CD4-positive, alpha-beta T cell (primary cell): ENCODE measurements at regions of chr12 and their contacts with region 1.

Region 1: GRCh38 chr12:132710422-132711168 is at the start of gene PGAM5:
- DNase-seq: peak; percentile 83 to 99 (median 92)
- ATAC-seq: peak; percentile 97
- H3K4me3 ChIP-seq: peak within 1 kb of the TSS; percentile 81
- H3K4me3 Mint-ChIP-seq: peak within 1 kb of the TSS; percentile 93
- H3K27ac ChIP-seq: peak within 1 kb of the TSS; percentile 88 to 93
- H3K27ac Mint-ChIP-seq: peak within 1 kb of the TSS; percentile 92
- H3K4me1 ChIP-seq: peaks cover 34% of the 10 kb centered on the region
- H3K4me1 Mint-ChIP-seq: peaks cover 16% of the 10 kb centered on the region
- H3K27me3 ChIP-seq: no peaks in the 10 kb centered on the region
- H3K27me3 Mint-ChIP-seq: no peaks in the 10 kb centered on the region
- CTCF ChIP-seq: no peak
- total RNA-seq, gene PGAM5: 12.8 to 15.1 TPM

Region 2: DNA sequence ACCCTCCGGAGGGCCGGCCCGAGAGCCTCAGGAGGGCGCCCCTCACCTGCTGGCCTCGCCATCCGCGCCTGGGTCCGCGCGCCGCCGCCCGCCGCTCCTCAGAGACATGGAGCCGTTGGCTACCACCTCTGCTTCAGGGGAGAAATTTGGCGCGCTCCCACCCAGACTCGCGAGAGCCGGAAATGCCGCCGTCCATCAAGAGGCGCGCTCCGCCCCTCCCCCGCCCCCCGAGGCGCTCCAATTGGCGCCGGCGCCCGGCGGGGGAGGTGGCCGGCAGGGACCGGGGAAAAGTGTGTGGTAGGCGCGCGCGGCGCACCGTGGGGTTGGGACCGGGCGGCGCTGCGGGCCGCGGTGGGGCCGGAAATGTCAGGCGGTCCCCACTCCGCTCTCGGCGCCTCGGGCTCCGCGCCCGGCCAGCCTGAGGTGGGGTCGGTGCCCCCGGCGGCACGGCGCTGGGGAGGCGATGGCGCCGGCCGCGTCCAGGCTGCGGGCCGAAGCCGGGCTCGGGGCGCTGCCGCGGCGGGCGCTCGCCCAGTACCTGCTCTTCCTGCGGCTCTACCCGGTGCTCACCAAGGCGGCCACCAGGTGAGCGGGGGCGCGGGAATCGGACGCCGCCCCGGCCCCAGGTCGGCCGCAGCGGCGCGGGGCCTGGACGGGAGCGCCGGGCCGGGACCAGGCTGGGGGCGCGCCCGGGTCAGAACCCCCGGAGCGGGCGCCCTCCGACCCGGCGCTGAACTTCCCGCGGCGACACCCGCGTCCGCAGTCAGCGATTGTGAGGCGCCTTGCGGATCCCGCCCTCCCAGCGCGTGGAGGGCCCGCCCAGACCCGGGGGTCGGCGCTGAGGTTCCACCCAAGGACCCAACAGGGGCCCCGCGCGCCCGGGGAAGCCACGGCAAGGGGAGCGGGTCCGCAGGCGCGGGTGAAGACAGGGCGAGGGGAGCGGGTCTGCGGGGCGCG is 23.1 kb before region 1 on chr12 and contains the starts of genes POLE and PXMP2:
- CTCF ChIA-PET with region 1: no interaction called
- POLR2A ChIA-PET with region 1: interaction called, 4 read pairs
- intact Hi-C with region 1: loop called (anchors 1 kb)
- DNase-seq: peak; percentile 88 to 97 (median 95)
- ATAC-seq: peak; percentile 94
- H3K4me3 ChIP-seq: peak within 1 kb of the TSS; percentile 48
- H3K4me3 Mint-ChIP-seq: peak within 1 kb of the TSS; percentile 91
- H3K27ac ChIP-seq: no peak within 1 kb of the TSS
- H3K27ac Mint-ChIP-seq: no peak within 1 kb of the TSS
- H3K4me1 ChIP-seq: peaks cover 22% of the 10 kb centered on the region
- H3K4me1 Mint-ChIP-seq: peaks cover 23% of the 10 kb centered on the region
- H3K27me3 ChIP-seq: no peaks in the 10 kb centered on the region
- H3K27me3 Mint-ChIP-seq: no peaks in the 10 kb centered on the region
- CTCF ChIP-seq: no peak
- total RNA-seq, gene POLE: 41.8 to 46.1 TPM
- total RNA-seq, gene PXMP2: 2.1 to 2.6 TPM